ENCODE measurements at regions of chr4 and their contacts with region 1.

Region 1: GRCh38 chr4:1346781-1347409 is at the start of gene UVSSA:
- DNase-seq: peak; percentile 100
- ATAC-seq: peak; percentile 96
- H3K4me3 ChIP-seq: peak within 1 kb of the TSS; percentile 87
- H3K4me3 Mint-ChIP-seq: peak within 1 kb of the TSS; percentile 86 to 99 (median 95)
- H3K27ac ChIP-seq: peak within 1 kb of the TSS; percentile 94
- H3K27ac Mint-ChIP-seq: peak within 1 kb of the TSS; percentile 83 to 99 (median 95)
- H3K4me1 ChIP-seq: peaks cover 14 to 19% of the 10 kb centered on the region in 2 donors
- H3K4me1 Mint-ChIP-seq: peaks cover 34 to 53% (median 42%) of the 10 kb centered on the region in 7 donors
- H3K27me3 ChIP-seq: no peaks in the 10 kb centered on the region
- H3K27me3 Mint-ChIP-seq: no peaks in the 10 kb centered on the region
- total RNA-seq, gene UVSSA: 29.5 to 44.1 (median 39.7) TPM

Region 2: DNA sequence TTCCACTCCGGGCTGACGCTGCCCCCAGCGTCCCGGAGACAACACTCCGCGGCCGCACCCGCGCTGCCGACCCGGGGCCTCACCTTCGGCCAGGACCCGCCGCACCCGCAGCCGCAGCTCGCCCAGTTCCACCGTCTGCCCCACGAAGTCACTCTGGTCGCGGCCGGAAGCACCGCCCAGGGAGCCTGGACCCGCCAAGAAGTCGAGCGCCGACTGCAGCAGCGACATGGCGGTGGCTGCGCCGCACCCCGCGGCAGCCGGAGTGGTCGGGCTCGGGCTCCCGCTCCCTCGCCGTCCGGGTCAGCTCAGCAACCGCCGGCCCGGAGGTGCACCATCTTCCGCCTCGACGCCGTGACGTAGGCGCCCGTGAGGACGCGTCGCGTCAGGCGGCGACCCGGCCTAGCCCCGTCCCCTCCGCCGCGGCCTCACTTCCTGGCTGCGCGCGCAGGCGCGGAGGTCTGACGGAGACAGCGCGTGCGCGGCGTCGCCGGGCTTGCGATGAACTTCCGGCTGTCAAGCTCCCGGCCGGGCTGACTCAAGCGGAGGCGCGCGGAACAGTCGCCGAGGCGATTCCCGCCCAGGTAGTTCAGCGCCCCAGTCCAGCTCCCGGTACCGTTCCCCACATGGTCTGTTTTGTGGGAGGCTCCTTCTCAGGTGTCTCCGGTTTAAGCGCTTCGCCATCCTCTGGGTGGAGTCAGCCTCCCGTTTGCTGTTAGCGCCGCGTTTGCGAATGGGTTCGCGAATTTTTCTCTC is 414.8 kb before region 1 on chr4 and contains the starts of genes GAK and TMEM175:
- CTCF ChIA-PET with region 1: no interaction called
- POLR2A ChIA-PET with region 1: no interaction called
- intact Hi-C with region 1: loop called in 1 of 2 experiments (anchors 1 kb)
- DNase-seq: peak; percentile 93 to 99 (median 98)
- ATAC-seq: peak; percentile 95
- H3K4me3 ChIP-seq: peak within 1 kb of the TSS; percentile 83
- H3K4me3 Mint-ChIP-seq: peak within 1 kb of the TSS; percentile 89 to 99 (median 95)
- H3K27ac ChIP-seq: peak within 1 kb of the TSS; percentile 99
- H3K27ac Mint-ChIP-seq: peak within 1 kb of the TSS; percentile 92 to 97 (median 96)
- H3K4me1 ChIP-seq: peaks cover 24 to 35% of the 10 kb centered on the region in 2 donors
- H3K4me1 Mint-ChIP-seq: peaks cover 35 to 59% (median 48%) of the 10 kb centered on the region in 7 donors
- H3K27me3 ChIP-seq: no peaks in the 10 kb centered on the region
- H3K27me3 Mint-ChIP-seq: no peaks in the 10 kb centered on the region
- total RNA-seq, gene GAK: 167 to 206 (median 174) TPM
- total RNA-seq, gene TMEM175: 28.9 to 69.9 (median 64.9) TPM

Region 3: DNA sequence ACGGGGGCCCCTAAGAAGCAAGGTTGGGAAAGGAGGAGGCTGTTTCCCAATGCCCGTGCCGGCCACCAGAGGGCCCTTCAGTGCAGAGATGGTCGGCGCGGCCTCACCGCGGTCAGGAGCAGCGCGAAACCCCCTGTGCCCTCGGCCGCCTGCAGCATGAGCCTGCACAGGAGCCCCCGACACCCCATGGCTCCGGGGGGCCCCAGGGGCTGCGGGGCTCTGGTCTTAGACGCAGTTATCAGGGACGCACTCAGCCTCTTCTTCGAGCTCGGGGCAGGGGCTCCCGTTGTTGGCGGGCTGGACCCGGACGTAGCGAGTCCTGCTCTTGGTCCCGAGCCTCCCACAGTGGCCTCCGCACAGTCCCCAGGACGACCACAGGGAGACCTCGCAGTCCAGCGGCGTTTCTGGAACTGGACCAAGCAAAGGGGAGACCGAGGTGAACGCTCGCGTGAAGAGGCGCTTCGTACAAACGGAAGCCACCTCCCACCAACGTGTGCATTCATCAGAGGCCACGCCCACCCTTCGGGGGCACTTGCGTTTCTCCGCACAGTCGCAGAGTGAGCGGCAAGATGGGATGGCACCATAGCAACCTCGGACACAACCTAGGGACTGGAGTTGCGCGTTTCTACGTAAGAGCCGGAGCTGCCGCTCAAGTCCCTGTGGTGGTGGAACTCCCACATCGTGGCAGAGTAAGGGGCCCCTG is 179.5 kb before region 1 on chr4:
- CTCF ChIA-PET with region 1: interaction called, 5 read pairs
- POLR2A ChIA-PET with region 1: interaction called, 5 read pairs
- intact Hi-C with region 1: loop called (anchors 1 kb)
- DNase-seq: peak; percentile 74 to 89 (median 82)
- ATAC-seq: peak; percentile 92
- H3K4me3 ChIP-seq: peak overlapping the region; percentile 90
- H3K4me3 Mint-ChIP-seq: peak overlapping the region; percentile 82 to 90 (median 87)
- H3K27ac ChIP-seq: peak overlapping the region; percentile 74
- H3K27ac Mint-ChIP-seq: peak overlapping the region in 8 of 9 donors; percentile 51 to 86 (median 70)
- H3K4me1 ChIP-seq: peaks cover 3 to 17% of the 10 kb centered on the region in 2 donors
- H3K4me1 Mint-ChIP-seq: peaks cover 8 to 26% (median 18%) of the 10 kb centered on the region in 7 donors
- H3K27me3 ChIP-seq: peaks cover 0 to 9% of the 10 kb centered on the region in 2 donors
- H3K27me3 Mint-ChIP-seq: peaks cover 0 to 21% (median 6%) of the 10 kb centered on the region in 5 donors

Region 4: DNA sequence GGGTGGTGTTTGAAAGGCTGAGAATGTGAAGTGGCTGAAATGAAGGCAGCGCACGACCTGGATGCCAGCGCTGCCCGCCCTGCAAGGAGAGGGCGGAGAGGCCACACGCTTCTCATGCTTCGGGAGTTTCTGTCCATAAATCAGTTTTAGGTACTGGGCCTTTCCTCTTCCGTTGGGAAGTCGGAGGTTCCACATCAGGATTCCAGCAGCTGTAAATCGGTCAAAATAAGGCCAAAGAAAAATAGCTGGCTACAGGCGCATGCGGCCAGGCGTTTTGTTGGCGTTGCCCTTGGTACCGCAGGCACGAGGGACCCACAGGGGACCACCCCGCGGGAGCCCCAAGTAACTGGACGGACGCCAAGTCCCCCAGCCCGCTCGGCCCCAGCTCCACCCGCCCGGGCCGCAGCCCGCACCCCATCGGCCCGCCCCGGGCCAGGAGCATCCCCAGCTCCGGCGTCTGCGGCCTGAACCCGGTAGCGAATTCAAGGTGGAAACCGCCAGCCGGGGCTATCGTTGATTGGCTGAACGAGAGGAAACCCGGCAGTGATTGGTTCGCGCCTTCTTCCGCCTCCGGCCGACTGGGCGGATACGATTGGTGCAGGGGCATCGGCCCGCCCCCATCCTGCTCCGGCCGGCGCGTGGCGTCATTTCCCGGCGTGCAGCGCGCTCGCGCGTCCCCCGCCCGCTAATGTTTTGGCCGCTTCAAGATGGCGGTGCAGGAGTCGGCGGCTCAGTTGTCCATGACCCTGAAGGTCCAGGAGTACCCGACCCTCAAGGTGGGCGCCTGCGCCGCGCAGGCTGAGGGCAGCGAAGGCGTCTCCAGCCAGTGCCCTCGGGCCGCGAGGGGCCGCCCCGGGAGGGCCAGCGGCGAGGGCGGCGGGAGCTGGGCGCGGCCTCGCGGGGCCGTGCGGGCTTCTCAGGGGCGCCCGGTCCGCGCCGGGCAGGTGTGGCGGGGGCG is 57.4 kb before region 1 on chr4 and contains the start of gene MAEA:
- CTCF ChIA-PET with region 1: interaction called, 5 read pairs
- POLR2A ChIA-PET with region 1: interaction called, 40 read pairs
- intact Hi-C with region 1: loop called (anchors 1 kb)
- DNase-seq: peak; percentile 91 to 97 (median 96)
- ATAC-seq: peak; percentile 98
- H3K4me3 ChIP-seq: peak within 1 kb of the TSS; percentile 96
- H3K4me3 Mint-ChIP-seq: peak within 1 kb of the TSS; percentile 91 to 99 (median 93)
- H3K27ac ChIP-seq: peak within 1 kb of the TSS; percentile 93
- H3K27ac Mint-ChIP-seq: peak within 1 kb of the TSS; percentile 88 to 94 (median 90)
- H3K4me1 ChIP-seq: peaks cover 22 to 34% of the 10 kb centered on the region in 2 donors
- H3K4me1 Mint-ChIP-seq: peaks cover 23 to 49% (median 37%) of the 10 kb centered on the region in 7 donors
- H3K27me3 ChIP-seq: no peaks in the 10 kb centered on the region
- H3K27me3 Mint-ChIP-seq: no peaks in the 10 kb centered on the region
- total RNA-seq, gene MAEA: 56.2 to 92.2 (median 79.4) TPM

Region 5: GRCh38 chr4:1604711-1605205 is 257.9 kb after region 1 on chr4:
- CTCF ChIA-PET with region 1: interaction called, 3 read pairs
- POLR2A ChIA-PET with region 1: interaction called, 14 read pairs
- intact Hi-C with region 1: no loop called
- DNase-seq: peak in 7 of 9 donors; percentile 55 to 81 (median 70)
- ATAC-seq: peak; percentile 80
- H3K4me3 ChIP-seq: peak overlapping the region; percentile 46
- H3K4me3 Mint-ChIP-seq: peak overlapping the region in 9 of 10 donors; percentile 55 to 84 (median 75)
- H3K27ac ChIP-seq: peak overlapping the region; percentile 45
- H3K27ac Mint-ChIP-seq: peak overlapping the region in 8 of 9 donors; percentile 77 to 97 (median 86)
- H3K4me1 ChIP-seq: peaks cover 10 to 29% of the 10 kb centered on the region in 2 donors
- H3K4me1 Mint-ChIP-seq: peaks cover 0 to 35% (median 13%) of the 10 kb centered on the region in 7 donors
- H3K27me3 ChIP-seq: no peaks in the 10 kb centered on the region
- H3K27me3 Mint-ChIP-seq: no peaks in the 10 kb centered on the region

Region 6: GRCh38 chr4:1856042-1856788 is 509.3 kb after region 1 on chr4 and contains the start of gene LETM1:
- CTCF ChIA-PET with region 1: no interaction called
- POLR2A ChIA-PET with region 1: no interaction called
- intact Hi-C with region 1: loop called in 1 of 2 experiments (anchors 5 kb)
- DNase-seq: peak; percentile 79 to 96 (median 88)
- ATAC-seq: peak; percentile 98
- H3K4me3 ChIP-seq: peak within 1 kb of the TSS; percentile 86
- H3K4me3 Mint-ChIP-seq: peak within 1 kb of the TSS; percentile 67 to 88 (median 83)
- H3K27ac ChIP-seq: peak within 1 kb of the TSS; percentile 70
- H3K27ac Mint-ChIP-seq: peak within 1 kb of the TSS in 8 of 9 donors; percentile 17 to 80 (median 48)
- H3K4me1 ChIP-seq: peaks cover 10 to 14% of the 10 kb centered on the region in 2 donors
- H3K4me1 Mint-ChIP-seq: peaks cover 31 to 45% (median 41%) of the 10 kb centered on the region in 7 donors
- H3K27me3 ChIP-seq: no peaks in the 10 kb centered on the region
- H3K27me3 Mint-ChIP-seq: no peaks in the 10 kb centered on the region
- total RNA-seq, gene LETM1: 29.5 to 56.4 (median 36.0) TPM

Region 7: DNA sequence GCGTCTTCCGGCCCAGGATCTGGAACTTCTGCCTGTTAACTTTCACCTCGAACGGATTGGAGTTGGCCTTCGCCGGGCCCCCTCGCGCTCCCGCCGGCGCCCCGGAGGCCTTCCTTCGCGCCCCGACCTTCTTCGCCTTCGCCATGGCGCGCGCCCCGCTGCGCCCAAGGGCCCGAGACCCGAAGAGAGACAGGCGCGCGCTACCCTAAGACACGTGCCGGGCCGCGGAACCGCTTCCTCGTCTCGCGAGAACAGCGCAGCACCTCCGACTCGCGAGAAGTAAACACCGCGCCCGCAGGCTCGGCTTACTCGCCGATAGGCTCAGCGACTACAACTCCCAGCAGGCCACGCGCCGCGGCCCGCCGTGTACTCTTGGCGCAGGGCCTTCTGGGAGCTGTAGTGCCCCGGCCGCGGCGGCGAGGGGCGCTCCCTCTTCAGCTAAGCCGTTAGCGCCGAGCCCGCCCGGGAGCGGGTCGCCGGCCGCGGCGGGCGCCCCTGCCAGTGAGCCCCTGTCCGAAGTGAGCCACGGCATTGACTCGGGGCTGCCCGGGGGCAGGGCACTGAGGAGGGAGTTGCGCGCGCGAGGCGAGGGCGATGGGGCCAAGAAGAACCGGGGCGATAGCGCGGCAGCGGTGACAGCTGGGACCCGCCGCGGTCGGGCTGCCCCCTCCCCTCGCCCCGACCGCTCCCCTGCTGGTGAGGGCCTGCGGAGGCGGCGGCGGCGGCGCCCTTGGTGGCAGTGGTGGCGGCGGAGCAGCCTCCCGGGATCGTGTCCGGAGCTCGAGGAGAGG is 1616.5 kb after region 1 on chr4 and contains the starts of genes GRK4 and NOP14:
- CTCF ChIA-PET with region 1: no interaction called
- POLR2A ChIA-PET with region 1: no interaction called
- intact Hi-C with region 1: loop called in 1 of 2 experiments (anchors 5 kb)
- DNase-seq: peak; percentile 91 to 98 (median 96)
- ATAC-seq: peak; percentile 97
- H3K4me3 ChIP-seq: peak within 1 kb of the TSS; percentile 98
- H3K4me3 Mint-ChIP-seq: peak within 1 kb of the TSS; percentile 82 to 95 (median 90)
- H3K27ac ChIP-seq: peak within 1 kb of the TSS; percentile 84
- H3K27ac Mint-ChIP-seq: peak within 1 kb of the TSS; percentile 67 to 93 (median 85)
- H3K4me1 ChIP-seq: peaks cover 18 to 19% of the 10 kb centered on the region in 2 donors
- H3K4me1 Mint-ChIP-seq: peaks cover 20 to 42% (median 35%) of the 10 kb centered on the region in 7 donors
- H3K27me3 ChIP-seq: no peaks in the 10 kb centered on the region
- H3K27me3 Mint-ChIP-seq: peaks cover 0 to 2% (median 0%) of the 10 kb centered on the region in 5 donors
- total RNA-seq, gene GRK4: 1.7 to 4.0 (median 2.8) TPM
- total RNA-seq, gene NOP14: 23.1 to 59.8 (median 43.9) TPM

Measured in naive thymus-derived CD4-positive, alpha-beta T cell (primary cell).